ENCODE measurements at regions of chr19 and their contacts with region 1.

Region 1: DNA sequence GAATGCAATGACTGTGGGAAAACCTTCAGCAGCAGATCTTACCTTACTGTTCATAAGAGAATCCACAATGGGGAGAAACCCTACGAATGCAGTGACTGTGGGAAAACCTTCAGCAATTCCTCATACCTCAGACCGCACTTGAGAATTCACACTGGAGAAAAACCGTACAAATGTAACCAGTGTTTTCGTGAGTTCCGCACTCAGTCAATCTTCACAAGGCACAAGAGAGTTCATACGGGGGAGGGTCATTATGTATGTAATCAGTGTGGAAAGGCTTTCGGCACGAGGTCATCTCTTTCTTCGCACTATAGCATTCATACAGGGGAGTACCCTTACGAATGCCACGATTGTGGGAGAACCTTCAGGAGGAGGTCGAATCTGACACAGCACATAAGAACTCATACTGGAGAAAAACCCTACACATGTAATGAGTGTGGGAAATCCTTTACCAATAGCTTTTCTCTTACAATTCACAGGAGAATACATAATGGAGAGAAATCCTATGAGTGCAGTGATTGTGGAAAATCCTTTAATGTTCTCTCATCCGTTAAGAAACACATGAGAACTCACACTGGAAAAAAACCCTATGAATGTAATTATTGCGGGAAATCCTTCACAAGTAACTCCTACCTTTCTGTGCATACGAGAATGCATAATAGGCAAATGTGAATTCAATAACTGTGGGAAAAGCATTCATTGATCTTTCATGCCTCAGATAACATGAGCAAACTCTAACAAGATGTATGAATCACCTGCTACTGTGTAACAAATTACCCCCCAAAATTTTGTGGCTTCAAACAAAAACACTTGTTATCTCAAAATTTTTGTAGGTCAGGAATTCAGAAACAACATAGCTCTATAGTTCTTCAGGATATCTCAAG is 13.8 kb downstream of the ZNF557 start:
- DNase-seq: no peak
- H3K4me3 ChIP-seq: no peak overlapping the region
- H3K4me3 Mint-ChIP-seq: no peak overlapping the region
- H3K27ac Mint-ChIP-seq: no peak overlapping the region
- H3K4me1 ChIP-seq: no peaks in the 10 kb centered on the region
- H3K4me1 Mint-ChIP-seq: no peaks in the 10 kb centered on the region
- H3K27me3 ChIP-seq: no peaks in the 10 kb centered on the region
- H3K27me3 Mint-ChIP-seq: no peaks in the 10 kb centered on the region
- CTCF ChIP-seq: no peak

Region 2: GRCh38 chr19:6947745-6948144 is 135.6 kb before region 1 on chr19:
- CTCF ChIA-PET with region 1: no interaction called
- POLR2A ChIA-PET with region 1: no interaction called
- intact Hi-C with region 1: no loop called
- DNase-seq: no peak
- H3K4me3 ChIP-seq: no peak overlapping the region
- H3K4me3 Mint-ChIP-seq: no peak overlapping the region
- H3K27ac Mint-ChIP-seq: no peak overlapping the region
- H3K4me1 ChIP-seq: no peaks in the 10 kb centered on the region
- H3K4me1 Mint-ChIP-seq: no peaks in the 10 kb centered on the region
- H3K27me3 ChIP-seq: no peaks in the 10 kb centered on the region
- H3K27me3 Mint-ChIP-seq: peaks cover 2% of the 10 kb centered on the region
- CTCF ChIP-seq: no peak

Region 3: DNA sequence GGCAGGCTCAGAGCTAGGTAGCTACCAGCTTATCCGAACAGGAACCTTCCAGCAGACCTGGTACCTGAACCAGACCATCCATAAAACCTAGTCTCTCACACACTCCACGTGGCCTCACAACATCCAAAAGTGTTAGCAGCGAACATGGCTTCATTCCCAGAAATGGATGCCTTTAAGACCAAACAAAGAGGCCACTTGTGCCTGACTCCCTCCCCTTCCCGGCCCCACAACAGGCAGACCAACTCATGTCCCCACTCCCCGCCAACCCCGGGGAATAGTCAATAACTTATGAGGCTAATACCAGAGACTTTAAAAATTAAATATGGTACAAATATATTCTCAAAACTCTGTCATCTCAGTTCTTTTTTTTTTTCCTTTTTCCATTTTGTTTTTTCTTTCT is 32.4 kb after region 1 on chr19:
- CTCF ChIA-PET with region 1: no interaction called
- POLR2A ChIA-PET with region 1: no interaction called
- intact Hi-C with region 1: no loop called
- DNase-seq: no peak
- H3K4me3 ChIP-seq: no peak overlapping the region
- H3K4me3 Mint-ChIP-seq: no peak overlapping the region
- H3K27ac Mint-ChIP-seq: no peak overlapping the region
- H3K4me1 ChIP-seq: no peaks in the 10 kb centered on the region
- H3K4me1 Mint-ChIP-seq: no peaks in the 10 kb centered on the region
- H3K27me3 ChIP-seq: no peaks in the 10 kb centered on the region
- H3K27me3 Mint-ChIP-seq: no peaks in the 10 kb centered on the region
- CTCF ChIP-seq: no peak

Region 4: DNA sequence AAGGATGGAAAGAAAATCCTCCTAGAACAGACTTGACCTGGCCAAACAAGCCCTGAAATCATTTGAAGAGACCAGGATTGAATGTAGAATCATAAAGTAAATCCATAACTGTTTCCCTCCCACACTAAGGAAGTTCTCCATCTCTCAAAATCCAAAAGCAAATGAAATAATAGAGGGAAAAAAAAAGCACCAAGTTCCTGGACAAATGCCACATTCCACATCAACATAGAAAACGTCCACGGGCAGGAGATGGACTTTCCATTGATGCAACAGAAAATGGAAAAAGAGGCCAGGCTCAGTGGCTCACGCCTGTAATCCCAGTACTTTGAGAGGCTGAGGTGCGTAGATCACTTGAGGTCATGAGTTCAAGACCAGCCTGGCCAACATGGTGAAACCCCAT is 154.7 kb after region 1 on chr19:
- CTCF ChIA-PET with region 1: no interaction called
- POLR2A ChIA-PET with region 1: interaction called, 10 read pairs
- intact Hi-C with region 1: no loop called
- DNase-seq: no peak
- H3K4me3 ChIP-seq: no peak overlapping the region
- H3K4me3 Mint-ChIP-seq: no peak overlapping the region
- H3K27ac Mint-ChIP-seq: no peak overlapping the region
- H3K4me1 ChIP-seq: no peaks in the 10 kb centered on the region
- H3K4me1 Mint-ChIP-seq: no peaks in the 10 kb centered on the region
- H3K27me3 ChIP-seq: no peaks in the 10 kb centered on the region
- H3K27me3 Mint-ChIP-seq: no peaks in the 10 kb centered on the region
- CTCF ChIP-seq: no peak

Measured in Caco-2 (cell line).